Ovary (tissue), 10 donors: ENCODE measurements at regions of chr15 and their contacts with region 1.

Region 1: DNA sequence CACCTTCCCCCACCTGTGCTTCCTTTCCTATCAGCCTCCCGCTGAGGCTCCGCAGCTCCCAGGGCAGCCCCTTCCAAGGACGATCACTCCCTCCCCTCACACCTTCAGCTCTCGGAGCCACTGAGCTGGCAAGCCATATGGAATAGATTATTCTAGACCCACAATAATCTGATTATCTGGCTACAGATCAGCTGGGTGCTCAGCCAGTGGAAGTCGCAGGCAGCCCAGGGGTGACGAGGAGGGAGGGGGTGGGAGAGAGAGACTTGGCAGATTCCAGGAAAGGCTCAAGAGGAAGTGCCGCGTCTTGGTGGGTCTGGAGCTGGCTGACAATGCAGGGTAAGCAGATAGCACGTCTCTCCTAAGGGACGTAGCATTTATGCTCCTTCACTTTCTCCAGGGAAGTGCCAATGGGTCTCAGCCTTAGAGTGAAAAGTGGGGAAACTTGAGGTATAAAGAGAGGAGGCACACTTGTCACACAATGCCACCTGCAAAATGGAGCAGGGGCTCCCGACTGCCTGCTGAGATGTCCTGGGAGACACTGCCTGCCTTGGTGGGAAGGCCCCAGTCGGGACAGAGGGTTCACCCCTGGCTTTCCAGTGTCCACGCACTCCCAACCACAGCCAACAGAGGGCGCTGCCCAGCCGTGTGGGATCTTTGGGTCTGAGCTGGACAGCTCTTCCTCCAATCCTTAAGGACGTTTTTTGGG is 9.4 kb upstream of the MESP1 start:
- DNase-seq: peak; percentile 45 to 86 (median 66)
- H3K4me3 ChIP-seq: no peak overlapping the region
- H3K27ac ChIP-seq: no peak overlapping the region
- H3K4me1 ChIP-seq: no peaks in the 10 kb centered on the region
- H3K27me3 ChIP-seq: no peaks in the 10 kb centered on the region
- CTCF ChIP-seq: peak; percentile 36 to 65 (median 62)
- EP300 ChIP-seq: no peak
- POLR2A ChIP-seq: no peak

Region 2: GRCh38 chr15:88498996-88499395 is 1261.5 kb before region 1 on chr15:
- intact Hi-C with region 1: no loop called
- DNase-seq: no peak
- H3K4me3 ChIP-seq: no peak overlapping the region
- H3K27ac ChIP-seq: no peak overlapping the region
- H3K4me1 ChIP-seq: no peaks in the 10 kb centered on the region
- H3K27me3 ChIP-seq: no peaks in the 10 kb centered on the region
- CTCF ChIP-seq: no peak
- EP300 ChIP-seq: no peak
- POLR2A ChIP-seq: no peak

Region 3: DNA sequence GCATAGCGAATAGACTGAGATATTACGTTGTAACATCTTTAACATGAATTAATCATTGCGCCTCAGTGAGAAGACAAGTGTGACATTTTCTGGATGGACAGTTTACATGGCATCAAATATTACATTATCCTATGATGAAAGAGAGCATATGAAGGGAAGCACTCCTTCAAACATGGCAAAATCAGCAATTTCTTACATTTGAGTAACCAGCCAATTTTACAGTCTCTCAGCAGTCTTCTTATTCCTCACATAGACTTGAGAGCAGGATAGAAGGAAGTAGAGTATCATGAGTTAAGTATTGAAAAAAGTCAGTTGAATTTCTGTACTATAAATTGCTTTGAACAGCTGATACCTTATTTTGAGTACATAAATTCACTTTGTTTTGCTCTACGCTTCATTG is 477.8 kb before region 1 on chr15:
- intact Hi-C with region 1: no loop called
- DNase-seq: no peak
- H3K4me3 ChIP-seq: no peak overlapping the region
- H3K27ac ChIP-seq: no peak overlapping the region
- H3K4me1 ChIP-seq: no peaks in the 10 kb centered on the region
- H3K27me3 ChIP-seq: no peaks in the 10 kb centered on the region
- CTCF ChIP-seq: no peak
- EP300 ChIP-seq: no peak
- POLR2A ChIP-seq: no peak

Region 4: GRCh38 chr15:89613031-89613430 is 147.4 kb before region 1 on chr15:
- intact Hi-C with region 1: no loop called
- DNase-seq: no peak
- H3K4me3 ChIP-seq: no peak overlapping the region
- H3K27ac ChIP-seq: no peak overlapping the region
- H3K4me1 ChIP-seq: no peaks in the 10 kb centered on the region
- H3K27me3 ChIP-seq: no peaks in the 10 kb centered on the region
- CTCF ChIP-seq: no peak
- EP300 ChIP-seq: no peak
- POLR2A ChIP-seq: no peak

Region 5: GRCh38 chr15:89665449-89666181 is 94.8 kb before region 1 on chr15:
- intact Hi-C with region 1: no loop called
- DNase-seq: peak; percentile 61 to 80 (median 73)
- H3K4me3 ChIP-seq: peak overlapping the region; percentile 39
- H3K27ac ChIP-seq: peak overlapping the region; percentile 79 to 96
- H3K4me1 ChIP-seq: peaks cover 7% of the 10 kb centered on the region
- H3K27me3 ChIP-seq: no peaks in the 10 kb centered on the region
- CTCF ChIP-seq: no peak
- EP300 ChIP-seq: no peak
- POLR2A ChIP-seq: no peak

Region 6: DNA sequence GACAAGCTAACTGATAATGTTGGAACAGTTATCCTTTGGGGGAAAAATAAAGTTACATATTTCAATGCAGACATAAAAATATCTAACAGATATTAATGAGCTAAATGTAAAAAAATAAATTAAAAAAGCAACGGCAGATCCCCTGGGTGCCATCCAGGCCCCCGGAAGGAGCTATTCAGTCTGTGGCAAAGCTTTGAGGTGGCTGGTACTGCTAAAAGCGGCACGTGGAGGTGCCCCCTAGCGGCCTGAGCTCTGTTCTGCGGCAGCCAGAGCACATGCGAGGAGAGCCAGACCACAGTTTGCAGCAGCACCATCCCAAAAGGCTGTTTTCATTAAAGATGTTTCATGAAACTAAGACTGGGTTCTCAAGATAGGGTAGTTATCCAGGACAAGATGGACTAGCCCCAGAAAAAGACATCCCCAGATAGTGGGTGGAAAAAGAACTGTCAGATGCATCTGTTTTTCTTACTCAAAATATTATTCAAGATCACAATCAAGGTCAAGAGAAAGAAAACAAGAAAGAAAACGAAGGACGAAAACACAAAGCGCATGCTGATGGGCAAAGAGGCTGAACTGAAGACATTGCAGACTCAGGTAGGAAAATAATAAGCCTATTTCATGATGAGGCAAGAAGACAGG is 114.6 kb after region 1 on chr15:
- intact Hi-C with region 1: loop called in 3 of 4 experiments (anchors 2 to 10 kb)
- DNase-seq: peak; percentile 70 to 86 (median 81)
- H3K4me3 ChIP-seq: no peak overlapping the region
- H3K27ac ChIP-seq: no peak overlapping the region
- H3K4me1 ChIP-seq: peaks cover 4% of the 10 kb centered on the region
- H3K27me3 ChIP-seq: no peaks in the 10 kb centered on the region
- CTCF ChIP-seq: peak; percentile 53 to 66 (median 66)
- EP300 ChIP-seq: no peak
- POLR2A ChIP-seq: no peak

Region 7: DNA sequence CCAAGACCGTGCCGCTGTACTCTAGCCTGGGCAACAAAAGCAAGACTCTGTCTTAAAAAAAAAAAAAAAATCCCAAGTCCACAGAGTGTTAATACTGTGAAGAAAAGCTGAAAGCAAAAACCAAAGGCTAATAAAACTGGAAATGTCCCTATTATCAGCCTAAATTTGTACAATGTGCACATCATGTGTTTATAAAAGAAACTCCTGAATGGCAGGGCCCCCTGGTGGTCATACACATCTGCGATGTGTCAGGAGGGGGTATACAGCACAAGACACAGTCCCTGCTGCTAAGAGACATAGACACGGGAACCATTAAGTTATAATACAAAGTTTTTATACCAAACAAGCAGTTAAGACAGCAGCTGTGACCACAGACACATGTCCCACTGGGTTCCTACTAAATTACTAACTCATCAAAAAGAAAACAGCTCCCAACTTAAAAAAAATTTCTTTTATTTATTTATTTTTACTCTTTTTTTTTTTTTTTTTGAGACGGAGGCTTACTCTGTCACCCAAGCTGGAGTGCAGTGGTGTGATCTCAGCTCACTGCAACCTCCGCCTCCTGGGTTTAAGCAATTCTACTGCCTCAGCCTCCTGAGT is 310.9 kb after region 1 on chr15:
- intact Hi-C with region 1: loop called in 1 of 4 experiments (anchors 10 kb)
- DNase-seq: peak; percentile 65 to 81 (median 80)
- H3K4me3 ChIP-seq: no peak overlapping the region
- H3K27ac ChIP-seq: no peak overlapping the region
- H3K4me1 ChIP-seq: no peaks in the 10 kb centered on the region
- H3K27me3 ChIP-seq: no peaks in the 10 kb centered on the region
- CTCF ChIP-seq: peak; percentile 38 to 53 (median 43)
- EP300 ChIP-seq: no peak
- POLR2A ChIP-seq: no peak